CD8-positive, alpha-beta T cell (primary cell): ENCODE measurements at regions of chr6 and their contacts with region 1.

Region 1: GRCh38 chr6:116253505-116254296 is at the start of gene TSPYL4:
- DNase-seq: peak; percentile 83 to 98 (median 91)
- ATAC-seq: peak; percentile 94
- H3K4me3 ChIP-seq: peak within 1 kb of the TSS; percentile 89 to 91
- H3K4me3 Mint-ChIP-seq: no peak within 1 kb of the TSS
- H3K27ac ChIP-seq: peak within 1 kb of the TSS; percentile 95 to 98
- H3K27ac Mint-ChIP-seq: no peak within 1 kb of the TSS
- H3K4me1 ChIP-seq: peaks cover 37% of the 10 kb centered on the region
- H3K4me1 Mint-ChIP-seq: peaks cover 26% of the 10 kb centered on the region
- H3K27me3 ChIP-seq: no peaks in the 10 kb centered on the region
- H3K27me3 Mint-ChIP-seq: no peaks in the 10 kb centered on the region
- CTCF ChIP-seq: no peak
- total RNA-seq, gene TSPYL4: 51.0 to 51.6 TPM

Region 2: DNA sequence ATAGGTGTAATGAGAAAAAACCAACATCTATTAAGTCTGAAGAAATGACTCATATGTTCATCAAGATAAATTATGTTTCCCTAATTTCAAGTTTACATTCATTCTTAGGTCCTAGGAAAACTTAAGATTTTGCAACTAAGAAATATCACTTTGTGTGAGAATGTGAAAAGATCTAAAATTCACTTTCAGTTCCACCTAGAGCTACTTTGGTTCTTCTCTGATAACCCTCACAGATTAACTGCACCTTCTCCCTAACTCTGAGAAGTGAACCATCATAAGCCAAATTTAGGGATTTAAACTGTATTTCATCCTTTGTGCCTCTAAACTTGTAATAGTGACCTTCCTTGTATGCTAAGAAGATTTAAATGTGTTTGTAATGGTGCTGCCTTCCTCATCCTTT is 406.0 kb before region 1 on chr6:
- CTCF ChIA-PET with region 1: no interaction called
- POLR2A ChIA-PET with region 1: no interaction called
- intact Hi-C with region 1: no loop called
- DNase-seq: no peak
- ATAC-seq: no peak
- H3K4me3 ChIP-seq: no peak overlapping the region
- H3K4me3 Mint-ChIP-seq: no peak overlapping the region
- H3K27ac ChIP-seq: no peak overlapping the region
- H3K27ac Mint-ChIP-seq: no peak overlapping the region
- H3K4me1 ChIP-seq: no peaks in the 10 kb centered on the region
- H3K4me1 Mint-ChIP-seq: no peaks in the 10 kb centered on the region
- H3K27me3 ChIP-seq: no peaks in the 10 kb centered on the region
- H3K27me3 Mint-ChIP-seq: no peaks in the 10 kb centered on the region
- CTCF ChIP-seq: no peak

Region 3: GRCh38 chr6:116268589-116269293 is 15.0 kb after region 1 on chr6:
- CTCF ChIA-PET with region 1: interaction called, 4 read pairs
- POLR2A ChIA-PET with region 1: interaction called, 6 read pairs
- intact Hi-C with region 1: loop called (anchors 1 to 2 kb)
- DNase-seq: peak in 2 of 9 experiments; percentile 69 to 79
- ATAC-seq: peak; percentile 82
- H3K4me3 ChIP-seq: no peak overlapping the region
- H3K4me3 Mint-ChIP-seq: no peak overlapping the region
- H3K27ac ChIP-seq: no peak overlapping the region
- H3K27ac Mint-ChIP-seq: peak overlapping the region; percentile 9
- H3K4me1 ChIP-seq: peaks cover 17% of the 10 kb centered on the region
- H3K4me1 Mint-ChIP-seq: peaks cover 42% of the 10 kb centered on the region
- H3K27me3 ChIP-seq: no peaks in the 10 kb centered on the region
- H3K27me3 Mint-ChIP-seq: no peaks in the 10 kb centered on the region
- CTCF ChIP-seq: peak; percentile 82

Region 4: DNA sequence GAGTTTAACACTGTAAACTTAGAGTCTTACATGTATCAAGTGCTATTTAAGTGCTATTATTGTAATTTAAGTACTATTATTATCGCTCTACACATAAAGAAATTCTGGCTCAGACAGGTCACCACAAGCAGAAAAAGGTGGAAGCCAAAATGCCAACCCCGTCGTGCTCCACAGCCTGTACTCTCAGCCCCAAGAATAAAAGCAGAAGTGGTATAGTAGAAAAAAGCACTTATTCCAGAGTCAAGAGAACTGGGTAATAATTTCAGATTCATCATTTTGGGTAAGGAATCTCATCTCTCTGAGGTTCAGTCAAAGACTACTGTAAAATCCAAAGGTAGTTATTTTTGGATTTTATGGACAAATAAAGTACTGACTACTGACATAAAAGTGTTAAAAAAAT is 413.9 kb after region 1 on chr6:
- CTCF ChIA-PET with region 1: no interaction called
- POLR2A ChIA-PET with region 1: no interaction called
- intact Hi-C with region 1: loop called in 1 of 2 experiments (anchors 1 kb)
- DNase-seq: no peak
- ATAC-seq: no peak
- H3K4me3 ChIP-seq: peak overlapping the region; percentile 71 to 83
- H3K4me3 Mint-ChIP-seq: peak overlapping the region; percentile 99
- H3K27ac ChIP-seq: peak overlapping the region; percentile 70 to 84
- H3K27ac Mint-ChIP-seq: no peak overlapping the region
- H3K4me1 ChIP-seq: peaks cover 33% of the 10 kb centered on the region
- H3K4me1 Mint-ChIP-seq: peaks cover 44% of the 10 kb centered on the region
- H3K27me3 ChIP-seq: no peaks in the 10 kb centered on the region
- H3K27me3 Mint-ChIP-seq: no peaks in the 10 kb centered on the region
- CTCF ChIP-seq: no peak